GM12878 (cell line): ENCODE measurements at regions of chr5 and their contacts with region 1.

Region 1: GRCh38 chr5:97231025-97231636 is 48.1 kb upstream of the RIOK2 start:
- DNase-seq: peak; percentile 20
- ATAC-seq: peak; percentile 94
- H3K4me3 ChIP-seq: no peak overlapping the region
- H3K27ac ChIP-seq: no peak overlapping the region
- H3K4me1 ChIP-seq: no peaks in the 10 kb centered on the region
- H3K27me3 ChIP-seq: no peaks in the 10 kb centered on the region
- CTCF ChIP-seq: peak; percentile 61 to 76 (median 73)
- EP300 ChIP-seq: no peak
- POLR2A ChIP-seq: no peak
- RAD21 ChIP-seq: peak; percentile 83

Region 2: GRCh38 chr5:97142521-97143254 is 88.4 kb before region 1 on chr5 and contains the start of gene LIX1:
- CTCF ChIA-PET with region 1: no interaction called
- POLR2A ChIA-PET with region 1: no interaction called
- RAD21 ChIA-PET with region 1: no interaction called
- SMC1A ChIA-PET with region 1: no interaction called
- in situ Hi-C with region 1: no loop called
- intact Hi-C with region 1: no loop called
- DNase-seq: no peak
- ATAC-seq: peak; percentile 97
- H3K4me3 ChIP-seq: no peak within 1 kb of the TSS
- H3K27ac ChIP-seq: no peak within 1 kb of the TSS
- H3K4me1 ChIP-seq: no peaks in the 10 kb centered on the region
- H3K27me3 ChIP-seq: no peaks in the 10 kb centered on the region
- CTCF ChIP-seq: peak; percentile 60 to 84 (median 70); a peak in 5 of 6 replicates
- EP300 ChIP-seq: no peak
- POLR2A ChIP-seq: no peak
- RAD21 ChIP-seq: peak; percentile 91
- polyA plus RNA-seq, gene LIX1: 0.02 TPM

Region 3: GRCh38 chr5:97243353-97243752 is 12.2 kb after region 1 on chr5:
- CTCF ChIA-PET with region 1: interaction called, 12 read pairs
- POLR2A ChIA-PET with region 1: no interaction called
- RAD21 ChIA-PET with region 1: interaction called, 4 read pairs
- SMC1A ChIA-PET with region 1: interaction called, 4 read pairs
- in situ Hi-C with region 1: no loop called
- intact Hi-C with region 1: no loop called
- DNase-seq: no peak
- ATAC-seq: no peak
- H3K4me3 ChIP-seq: no peak overlapping the region
- H3K27ac ChIP-seq: no peak overlapping the region
- H3K4me1 ChIP-seq: no peaks in the 10 kb centered on the region
- H3K27me3 ChIP-seq: no peaks in the 10 kb centered on the region
- CTCF ChIP-seq: no peak
- EP300 ChIP-seq: no peak
- POLR2A ChIP-seq: no peak
- RAD21 ChIP-seq: no peak

Region 4: DNA sequence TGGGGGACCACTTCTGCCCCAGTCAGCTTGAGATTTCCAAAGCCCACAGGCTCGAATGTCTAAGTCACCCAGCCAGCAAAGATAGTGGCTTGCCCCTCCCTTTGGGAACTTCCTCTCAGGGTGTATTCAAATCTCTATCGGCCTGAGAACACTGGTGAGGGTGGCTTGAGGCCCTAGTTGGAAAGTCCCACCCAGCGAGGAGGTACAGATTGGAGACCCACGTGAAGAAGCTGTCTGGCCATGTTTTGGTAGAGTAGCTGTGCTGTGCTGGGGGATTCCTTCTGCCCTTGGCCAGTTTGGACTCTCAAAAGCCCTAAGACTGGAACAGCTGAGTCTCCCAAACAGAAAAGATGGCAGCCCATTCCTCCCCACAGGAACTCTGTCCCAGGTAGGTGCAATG is 124.6 kb after region 1 on chr5:
- CTCF ChIA-PET with region 1: interaction called, 7 read pairs
- POLR2A ChIA-PET with region 1: no interaction called
- RAD21 ChIA-PET with region 1: interaction called, 13 read pairs
- SMC1A ChIA-PET with region 1: interaction called, 11 read pairs
- in situ Hi-C with region 1: no loop called
- intact Hi-C with region 1: no loop called
- DNase-seq: peak; percentile 74
- ATAC-seq: peak; percentile 90
- H3K4me3 ChIP-seq: peak overlapping the region; percentile 68
- H3K27ac ChIP-seq: peak overlapping the region; percentile 68
- H3K4me1 ChIP-seq: peaks cover 11% of the 10 kb centered on the region
- H3K27me3 ChIP-seq: no peaks in the 10 kb centered on the region
- CTCF ChIP-seq: no peak
- EP300 ChIP-seq: 0 out of 4 replicates have a peak, but pooled peaks of 1 of the 2 experiments have one; percentile 4
- POLR2A ChIP-seq: 0 out of 2 replicates have a peak, but pooled peaks have one; percentile 32
- RAD21 ChIP-seq: no peak

Region 5: DNA sequence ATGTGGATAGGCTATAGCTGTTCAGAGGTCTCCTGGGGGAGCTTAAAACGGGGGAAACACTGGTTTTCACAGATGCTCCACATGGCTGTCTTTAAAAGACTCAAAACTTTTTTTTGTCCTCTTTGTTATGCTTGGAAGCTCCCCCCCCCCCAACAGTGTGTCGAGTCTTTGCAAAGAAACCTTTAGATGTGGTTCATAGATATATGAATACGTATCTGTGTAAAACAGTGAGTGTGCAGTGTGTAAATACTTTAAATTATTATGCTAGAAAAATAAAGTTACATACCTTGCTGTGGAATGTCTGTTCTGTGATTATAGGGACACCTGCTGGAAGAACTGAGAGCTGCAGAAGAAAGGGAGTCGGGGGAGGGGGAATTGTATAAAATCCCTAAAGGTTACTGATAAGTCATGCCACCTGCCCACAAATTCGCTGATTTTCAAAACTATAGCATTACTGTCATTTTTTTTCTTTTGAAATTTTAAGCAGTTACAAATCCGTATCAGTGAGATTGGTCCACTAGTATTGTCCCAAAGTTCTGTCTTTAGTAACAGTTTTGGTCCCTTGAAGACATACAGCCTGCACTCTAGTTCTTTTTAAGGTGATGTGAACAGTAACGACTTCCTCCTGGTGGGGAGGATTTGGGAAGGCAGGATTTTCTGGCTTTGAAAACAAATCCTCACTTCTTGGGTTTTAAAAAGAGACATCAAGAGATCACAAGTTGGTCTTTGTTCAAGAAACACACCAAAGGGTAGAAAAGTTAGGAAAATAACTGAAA is 1565.3 kb after region 1 on chr5:
- CTCF ChIA-PET with region 1: interaction called, 20 read pairs
- POLR2A ChIA-PET with region 1: interaction called, 3 read pairs
- RAD21 ChIA-PET with region 1: interaction called, 26 read pairs
- SMC1A ChIA-PET with region 1: interaction called, 17 read pairs
- in situ Hi-C with region 1: no loop called
- intact Hi-C with region 1: no loop called
- DNase-seq: no peak
- ATAC-seq: peak; percentile 90
- H3K4me3 ChIP-seq: no peak overlapping the region
- H3K27ac ChIP-seq: no peak overlapping the region
- H3K4me1 ChIP-seq: no peaks in the 10 kb centered on the region
- H3K27me3 ChIP-seq: no peaks in the 10 kb centered on the region
- CTCF ChIP-seq: peak; percentile 70 to 80 (median 75)
- EP300 ChIP-seq: no peak
- POLR2A ChIP-seq: no peak
- RAD21 ChIP-seq: peak; percentile 89

Region 6: DNA sequence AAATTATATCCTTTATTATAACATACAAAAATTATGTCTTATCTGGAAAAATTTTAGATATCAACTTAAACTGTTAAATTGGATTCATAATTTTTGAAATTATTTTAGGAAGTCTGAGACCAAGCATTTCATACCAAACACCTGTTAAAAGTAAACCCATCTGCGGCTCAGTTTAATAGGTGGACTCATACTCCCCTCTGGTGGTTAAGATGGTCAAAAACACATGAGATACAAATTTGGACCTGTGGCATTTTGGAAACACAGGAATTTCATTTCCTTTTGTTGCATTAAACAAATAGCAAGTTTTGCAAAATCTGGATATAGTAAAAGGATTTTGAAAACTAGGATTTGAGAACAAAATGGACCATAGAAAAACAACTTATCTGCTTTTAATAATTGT is 1596.0 kb after region 1 on chr5:
- CTCF ChIA-PET with region 1: interaction called, 7 read pairs
- POLR2A ChIA-PET with region 1: no interaction called
- RAD21 ChIA-PET with region 1: no interaction called
- SMC1A ChIA-PET with region 1: interaction called, 4 read pairs
- in situ Hi-C with region 1: no loop called
- intact Hi-C with region 1: loop called (anchors 5 kb)
- DNase-seq: no peak
- ATAC-seq: peak; percentile 83
- H3K4me3 ChIP-seq: no peak overlapping the region
- H3K27ac ChIP-seq: no peak overlapping the region
- H3K4me1 ChIP-seq: no peaks in the 10 kb centered on the region
- H3K27me3 ChIP-seq: no peaks in the 10 kb centered on the region
- CTCF ChIP-seq: peak; percentile 46 to 60 (median 47); a peak in 5 of 6 replicates
- EP300 ChIP-seq: no peak
- POLR2A ChIP-seq: no peak
- RAD21 ChIP-seq: peak; percentile 88